ENCODE measurements at regions of chr7 and their contacts with region 1.

Region 1: GRCh38 chr7:159151231-159151630 is 6.6 kb upstream of the VIPR2 start:
- DNase-seq: no peak
- ATAC-seq: no peak
- H3K4me3 ChIP-seq: no peak overlapping the region
- H3K27ac ChIP-seq: no peak overlapping the region
- H3K4me1 ChIP-seq: no peaks in the 10 kb centered on the region
- H3K27me3 ChIP-seq: no peaks in the 10 kb centered on the region
- CTCF ChIP-seq: no peak
- POLR2A ChIP-seq: no peak
- RAD21 ChIP-seq: no peak

Region 2: GRCh38 chr7:157738066-157738460 is 1413.2 kb before region 1 on chr7:
- CTCF ChIA-PET with region 1: no interaction called
- POLR2A ChIA-PET with region 1: interaction called, 10 read pairs
- dilution Hi-C with region 1: no loop called
- in situ Hi-C with region 1: no loop called
- intact Hi-C with region 1: no loop called
- DNase-seq: no peak
- ATAC-seq: no peak
- H3K4me3 ChIP-seq: no peak overlapping the region
- H3K27ac ChIP-seq: no peak overlapping the region
- H3K4me1 ChIP-seq: no peaks in the 10 kb centered on the region
- H3K27me3 ChIP-seq: no peaks in the 10 kb centered on the region
- CTCF ChIP-seq: no peak
- POLR2A ChIP-seq: no peak
- RAD21 ChIP-seq: no peak